ENCODE measurements at regions of chrX and their contacts with region 1.

Region 1: DNA sequence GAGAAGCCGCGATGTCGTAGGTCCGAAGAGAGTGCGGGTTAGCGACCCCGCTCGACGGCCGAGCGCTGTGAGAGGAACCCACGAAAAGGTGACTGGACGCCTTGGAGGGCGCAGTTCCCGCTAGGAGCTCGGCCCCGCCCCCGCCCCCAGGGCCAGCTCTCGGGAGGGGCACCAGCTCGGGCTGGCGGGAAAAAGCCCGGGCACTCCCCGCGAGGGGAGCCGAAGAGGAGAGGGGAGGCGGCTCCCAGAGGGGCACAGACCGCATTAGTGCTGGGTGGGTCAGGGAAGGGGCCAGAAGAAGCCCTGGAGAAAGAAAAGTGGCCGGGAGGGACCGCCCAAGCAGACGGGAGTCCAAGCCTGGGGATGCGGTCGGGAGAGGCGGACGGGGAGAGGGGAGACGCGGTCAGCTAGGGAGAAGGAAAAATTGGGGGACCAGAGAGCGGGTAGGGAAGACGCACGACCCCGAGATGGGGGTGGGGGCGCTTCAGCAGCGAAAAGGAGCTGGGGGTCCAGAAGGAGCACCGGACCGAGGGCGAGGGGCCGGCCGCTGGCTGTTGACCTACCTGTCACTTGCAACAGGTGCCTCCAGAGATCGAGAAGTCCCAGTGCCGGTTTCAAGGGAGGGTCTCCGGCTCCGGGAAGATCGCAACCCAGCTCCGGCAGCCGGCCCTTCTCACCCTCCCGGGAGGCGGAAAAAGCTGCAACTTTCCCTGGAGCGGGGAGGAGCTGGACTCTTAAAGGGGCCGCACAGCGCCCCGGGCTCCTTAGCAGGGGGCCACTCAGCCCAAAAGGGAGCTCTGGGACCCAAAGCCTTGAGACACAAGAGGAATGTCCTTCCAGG is at the start of gene SYTL4:
- DNase-seq: peak; percentile 57
- H3K4me3 ChIP-seq: peak within 1 kb of the TSS; percentile 71 to 74 (median 71)
- H3K27ac ChIP-seq: peak within 1 kb of the TSS; percentile 35
- H3K4me1 ChIP-seq: peaks cover 16% of the 10 kb centered on the region
- H3K27me3 ChIP-seq: no peaks in the 10 kb centered on the region
- CTCF ChIP-seq: no peak
- POLR2A ChIP-seq: no peak
- total RNA-seq, gene SYTL4: 18.4 and 25.6 TPM in 2 replicates

Region 2: DNA sequence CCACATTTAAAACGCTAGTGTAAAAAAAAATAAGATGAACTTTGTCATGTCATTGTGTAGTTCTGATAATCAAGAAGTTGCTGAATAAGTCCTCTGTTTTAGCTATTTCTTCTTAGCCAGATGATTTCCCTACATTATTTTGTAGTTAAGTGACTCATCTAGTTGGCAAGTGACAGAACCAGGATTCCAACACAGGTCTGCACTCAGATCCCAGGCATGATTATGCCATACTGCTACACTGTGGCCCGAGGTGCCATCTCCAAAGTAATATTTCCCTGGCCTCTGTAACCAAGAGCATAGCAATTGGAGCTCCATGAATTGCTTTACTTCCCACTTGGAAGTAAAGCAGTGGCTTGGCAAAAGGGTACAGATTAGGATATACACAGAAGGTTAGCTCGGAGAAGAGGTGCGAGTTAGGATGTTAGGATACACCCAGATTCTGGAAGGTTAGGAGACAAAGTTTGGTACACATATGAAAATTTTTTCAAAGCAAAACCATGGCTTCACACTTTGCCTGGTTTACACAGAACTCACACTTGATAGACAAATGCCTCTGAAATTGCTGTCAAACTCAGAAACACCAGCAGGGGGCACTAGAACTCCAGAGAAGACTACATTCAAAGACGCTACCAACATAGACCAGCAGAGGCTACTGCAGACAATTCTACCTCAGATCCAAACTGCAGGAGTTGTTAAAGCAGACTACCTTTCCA is 46.2 kb before region 1 on chrX:
- CTCF ChIA-PET with region 1: interaction called, 26 read pairs
- POLR2A ChIA-PET with region 1: no interaction called
- dilution Hi-C with region 1: no loop called
- intact Hi-C with region 1: loop called (anchors 5 kb)
- DNase-seq: peak; percentile 84
- H3K4me3 ChIP-seq: no peak overlapping the region
- H3K27ac ChIP-seq: peak overlapping the region; percentile 47
- H3K4me1 ChIP-seq: peaks cover 17% of the 10 kb centered on the region
- H3K27me3 ChIP-seq: no peaks in the 10 kb centered on the region
- CTCF ChIP-seq: peak; percentile 59 to 69
- POLR2A ChIP-seq: no peak

Region 3: GRCh38 chrX:100745798-100746537 is 14.3 kb after region 1 on chrX:
- CTCF ChIA-PET with region 1: no interaction called
- POLR2A ChIA-PET with region 1: interaction called, 3 read pairs
- dilution Hi-C with region 1: no loop called
- intact Hi-C with region 1: loop called (anchors 1 kb)
- DNase-seq: peak; percentile 49
- H3K4me3 ChIP-seq: no peak overlapping the region
- H3K27ac ChIP-seq: peak overlapping the region; percentile 78
- H3K4me1 ChIP-seq: peaks cover 39% of the 10 kb centered on the region
- H3K27me3 ChIP-seq: no peaks in the 10 kb centered on the region
- CTCF ChIP-seq: no peak
- POLR2A ChIP-seq: no peak